Activated CD8-positive, alpha-beta T cell treated with anti-CD3 and anti-CD28 coated beads for 36 hours (primary cell): ENCODE measurements at regions of chr6 and their contacts with region 1.

Region 1: GRCh38 chr6:132530293-132530974 is 7.6 kb upstream of the TAAR9 start:
- DNase-seq: peak; percentile 72
- ATAC-seq: peak; percentile 75
- H3K4me3 Mint-ChIP-seq: peak overlapping the region; percentile 17
- H3K27ac Mint-ChIP-seq: no peak overlapping the region
- H3K4me1 Mint-ChIP-seq: no peaks in the 10 kb centered on the region
- H3K27me3 Mint-ChIP-seq: peaks cover 10% of the 10 kb centered on the region
- CTCF ChIP-seq: peak; percentile 80

Region 2: DNA sequence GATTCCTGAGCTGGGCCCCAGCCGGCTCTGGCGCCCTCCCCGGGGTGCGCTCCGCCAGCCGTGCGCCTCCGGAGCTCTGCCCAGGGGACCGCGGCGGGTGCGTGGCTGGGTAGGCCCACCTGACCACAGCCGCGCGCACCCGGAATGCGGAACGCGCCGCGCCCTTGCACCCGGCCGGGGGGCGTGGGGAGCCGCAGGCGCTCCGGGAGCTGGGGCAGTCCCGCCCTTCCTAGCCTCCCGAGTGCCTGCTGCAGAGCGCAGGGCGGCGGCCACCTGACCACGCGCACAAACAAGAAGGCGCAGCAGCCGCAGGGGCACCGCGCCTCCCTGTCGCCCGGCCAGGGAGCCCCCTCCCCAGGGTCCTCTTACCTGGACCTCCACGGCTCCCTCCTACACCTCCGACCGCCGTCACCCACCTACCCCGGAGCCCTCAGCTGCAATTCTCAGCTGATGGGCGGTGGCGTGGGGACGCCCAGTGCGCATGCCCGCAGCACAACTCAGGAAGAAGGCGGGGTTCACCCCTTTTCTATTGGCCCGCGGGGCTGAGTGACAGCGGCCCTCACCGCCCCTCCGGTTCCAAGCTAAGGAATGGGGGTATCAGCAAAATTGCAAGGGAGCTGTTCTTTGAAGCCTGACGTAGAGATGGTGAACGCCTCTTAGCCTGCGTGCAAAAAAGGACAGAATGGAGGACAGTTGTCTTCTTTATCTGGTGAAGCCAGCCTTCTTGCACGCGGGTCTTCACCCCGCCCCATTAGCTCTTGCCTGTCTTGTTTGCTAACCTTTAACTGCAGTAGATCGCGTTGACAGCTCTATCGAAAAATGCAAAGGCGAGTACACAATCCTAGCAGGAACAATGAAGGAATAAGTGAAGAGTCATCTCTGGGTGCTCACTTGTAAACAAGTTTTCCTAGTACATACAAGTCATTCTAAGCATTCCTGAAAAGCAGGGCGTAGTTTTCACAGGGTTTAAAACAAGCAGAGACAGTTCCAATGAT is 17.5 kb before region 1 on chr6 and contains the start of gene STX7:
- CTCF ChIA-PET with region 1: interaction called, 20 read pairs
- POLR2A ChIA-PET with region 1: no interaction called
- intact Hi-C with region 1: no loop called
- DNase-seq: peak; percentile 86
- ATAC-seq: peak; percentile 97
- H3K4me3 Mint-ChIP-seq: peak within 1 kb of the TSS; percentile 89
- H3K27ac Mint-ChIP-seq: peak within 1 kb of the TSS; percentile 87
- H3K4me1 Mint-ChIP-seq: peaks cover 26% of the 10 kb centered on the region
- H3K27me3 Mint-ChIP-seq: peaks cover 1% of the 10 kb centered on the region
- CTCF ChIP-seq: no peak
- total RNA-seq, gene STX7: 11.8 to 15.1 TPM

Region 3: GRCh38 chr6:132669690-132670291 is 139.4 kb after region 1 on chr6:
- CTCF ChIA-PET with region 1: interaction called, 3 read pairs
- POLR2A ChIA-PET with region 1: no interaction called
- intact Hi-C with region 1: loop called (anchors 10 kb)
- DNase-seq: no peak
- ATAC-seq: peak; percentile 60
- H3K4me3 Mint-ChIP-seq: no peak overlapping the region
- H3K27ac Mint-ChIP-seq: no peak overlapping the region
- H3K4me1 Mint-ChIP-seq: peaks cover 2% of the 10 kb centered on the region
- H3K27me3 Mint-ChIP-seq: peaks cover 6% of the 10 kb centered on the region
- CTCF ChIP-seq: peak; percentile 72